ENCODE measurements at regions of chr11 and their contacts with region 1.

Region 1: GRCh38 chr11:110173811-110174644 is 80.8 kb downstream of the ZC3H12C start:
- DNase-seq: no peak
- H3K4me3 ChIP-seq: no peak overlapping the region
- H3K27ac ChIP-seq: no peak overlapping the region
- H3K27me3 ChIP-seq: no peaks in the 10 kb centered on the region
- CTCF ChIP-seq: peak; percentile 82

Region 2: GRCh38 chr11:110160016-110160415 is 14.0 kb before region 1 on chr11:
- CTCF ChIA-PET with region 1: interaction called, 11 read pairs
- POLR2A ChIA-PET with region 1: no interaction called
- DNase-seq: no peak
- H3K4me3 ChIP-seq: no peak overlapping the region
- H3K27ac ChIP-seq: no peak overlapping the region
- H3K27me3 ChIP-seq: no peaks in the 10 kb centered on the region
- CTCF ChIP-seq: no peak

Region 3: GRCh38 chr11:110207123-110207522 is 33.1 kb after region 1 on chr11:
- CTCF ChIA-PET with region 1: no interaction called
- POLR2A ChIA-PET with region 1: no interaction called
- DNase-seq: no peak
- H3K4me3 ChIP-seq: no peak overlapping the region
- H3K27ac ChIP-seq: no peak overlapping the region
- H3K27me3 ChIP-seq: no peaks in the 10 kb centered on the region
- CTCF ChIP-seq: no peak

Region 4: GRCh38 chr11:110818032-110818687 is 644.1 kb after region 1 on chr11:
- CTCF ChIA-PET with region 1: no interaction called
- POLR2A ChIA-PET with region 1: no interaction called
- DNase-seq: no peak
- H3K4me3 ChIP-seq: no peak overlapping the region
- H3K27ac ChIP-seq: no peak overlapping the region
- H3K27me3 ChIP-seq: no peaks in the 10 kb centered on the region
- CTCF ChIP-seq: no peak